CD14-positive monocyte (primary cell): ENCODE measurements at regions of chr12 and their contacts with region 1.

Region 1: DNA sequence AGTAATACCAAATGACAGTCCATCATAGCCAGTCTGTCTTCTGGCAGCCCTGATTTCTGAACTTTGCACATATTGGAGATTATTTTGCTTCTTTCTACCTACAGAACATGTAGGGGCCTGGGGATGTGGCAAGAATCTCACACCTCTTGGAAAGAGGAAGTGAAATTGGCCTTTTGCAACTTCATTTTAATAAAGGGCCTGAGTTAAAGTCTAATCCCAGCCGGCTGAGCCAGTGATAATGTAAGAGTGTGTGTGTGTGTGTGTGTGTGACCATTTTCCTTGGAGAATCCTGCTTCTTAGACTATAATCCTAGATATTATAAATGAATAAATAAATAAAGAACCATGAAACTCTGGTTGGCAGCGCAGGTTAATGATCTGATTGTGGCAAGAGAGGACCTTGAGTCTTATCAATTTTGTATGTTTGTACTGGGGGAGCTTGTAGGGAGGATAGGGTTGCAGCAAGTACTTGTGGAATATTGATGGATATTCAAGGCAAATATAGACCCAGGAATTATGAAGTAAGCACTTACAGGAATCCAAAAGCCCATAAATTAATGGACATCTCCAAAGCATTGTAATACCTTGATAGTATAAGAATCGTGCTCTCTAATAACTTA is 233.2 kb upstream of the AMIGO2 start:
- DNase-seq: peak; percentile 45 to 84 (median 62)
- H3K4me3 ChIP-seq: no peak overlapping the region
- H3K4me3 Mint-ChIP-seq: no peak overlapping the region
- H3K27ac ChIP-seq: no peak overlapping the region
- H3K27ac Mint-ChIP-seq: peak overlapping the region in 4 of 7 donors; percentile 49 to 83 (median 78)
- H3K4me1 ChIP-seq: peaks cover 11 to 27% of the 10 kb centered on the region in 2 donors
- H3K4me1 Mint-ChIP-seq: peaks cover 35% of the 10 kb centered on the region
- H3K27me3 ChIP-seq: no peaks in the 10 kb centered on the region
- H3K27me3 Mint-ChIP-seq: peaks cover 0 to 2% (median 0%) of the 10 kb centered on the region in 3 donors
- CTCF ChIP-seq: no peak

Region 2: GRCh38 chr12:47276621-47277309 is 36.2 kb before region 1 on chr12:
- intact Hi-C with region 1: loop called in 1 of 2 experiments (anchors 2 kb)
- DNase-seq: peak; percentile 57 to 75 (median 66)
- H3K4me3 ChIP-seq: peak overlapping the region in 1 of 3 experiments; percentile 35
- H3K4me3 Mint-ChIP-seq: peak overlapping the region in 1 of 2 donors; percentile 56
- H3K27ac ChIP-seq: peak overlapping the region in 1 of 2 donors; percentile 62
- H3K27ac Mint-ChIP-seq: peak overlapping the region; percentile 36 to 89 (median 77)
- H3K4me1 ChIP-seq: peaks cover 31 to 35% of the 10 kb centered on the region in 2 donors
- H3K4me1 Mint-ChIP-seq: peaks cover 39% of the 10 kb centered on the region
- H3K27me3 ChIP-seq: no peaks in the 10 kb centered on the region
- H3K27me3 Mint-ChIP-seq: peaks cover 0 to 2% (median 0%) of the 10 kb centered on the region in 3 donors
- CTCF ChIP-seq: no peak

Region 3: DNA sequence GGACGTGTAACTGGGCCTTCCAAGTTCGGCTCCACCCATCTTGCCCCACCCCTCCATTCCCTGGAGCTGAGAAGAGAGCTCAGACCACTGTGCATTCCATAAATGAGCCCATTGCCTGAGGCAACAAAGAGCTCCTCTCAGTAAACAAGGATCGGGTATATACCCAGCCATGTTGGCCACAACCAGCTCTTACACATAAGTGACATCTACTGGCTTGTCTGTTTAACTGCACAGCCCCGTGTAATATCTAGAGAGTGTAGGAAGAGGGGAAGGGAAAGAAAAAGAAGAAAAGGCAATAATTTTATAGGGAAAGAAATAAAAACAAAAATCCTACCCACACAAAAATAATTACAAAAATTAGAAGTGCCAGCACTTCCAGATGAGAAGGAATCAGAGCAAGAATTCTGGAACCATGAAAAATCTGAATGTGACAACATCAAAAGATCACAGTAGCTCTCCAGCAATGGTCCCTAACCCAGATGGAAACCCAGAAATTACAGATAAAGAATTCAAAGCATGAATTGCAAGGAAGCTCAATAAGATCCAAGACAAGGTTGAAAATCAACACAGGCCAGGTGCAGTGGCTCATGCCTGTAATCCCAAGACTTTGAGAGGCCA is 84.9 kb after region 1 on chr12:
- intact Hi-C with region 1: loop called in 1 of 2 experiments (anchors 5 kb)
- DNase-seq: peak; percentile 34 to 57 (median 53)
- H3K4me3 ChIP-seq: no peak overlapping the region
- H3K4me3 Mint-ChIP-seq: no peak overlapping the region
- H3K27ac ChIP-seq: no peak overlapping the region
- H3K27ac Mint-ChIP-seq: peak overlapping the region in 3 of 7 donors; percentile 27 to 63 (median 46)
- H3K4me1 ChIP-seq: peaks cover 9 to 17% of the 10 kb centered on the region in 2 donors
- H3K4me1 Mint-ChIP-seq: peaks cover 37% of the 10 kb centered on the region
- H3K27me3 ChIP-seq: no peaks in the 10 kb centered on the region
- H3K27me3 Mint-ChIP-seq: peaks cover 0 to 2% (median 0%) of the 10 kb centered on the region in 3 donors
- CTCF ChIP-seq: peak; percentile 70